ENCODE measurements at regions of chr2 and their contacts with region 1.

Region 1: DNA sequence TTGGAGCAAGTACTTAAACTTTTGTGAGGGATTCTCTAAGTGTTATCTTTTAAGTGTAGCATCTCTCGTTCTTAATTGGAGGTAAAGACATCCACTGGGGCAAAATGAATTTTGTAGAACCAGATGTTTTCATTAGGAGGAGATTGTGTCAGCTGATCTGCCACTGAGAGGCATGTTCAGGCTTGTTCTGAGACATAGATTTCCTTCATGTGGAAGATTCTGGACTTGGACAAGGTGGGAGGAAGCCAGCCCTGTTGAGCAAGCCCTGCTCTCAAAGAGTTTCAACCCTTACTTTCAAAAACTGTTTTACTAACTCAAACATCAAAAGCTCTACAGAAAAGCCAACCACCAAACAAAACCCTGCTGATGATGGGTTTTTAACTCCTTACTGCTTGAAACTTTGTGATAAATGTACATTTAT is 6.5 kb downstream of the MAP4K4 start:
- DNase-seq: no peak
- H3K4me3 ChIP-seq: peak overlapping the region in 17 of 59 donors; percentile 1 to 90 (median 20)
- H3K27ac ChIP-seq: peak overlapping the region in 57 of 59 donors; percentile 3 to 98 (median 72)
- H3K27me3 ChIP-seq: no peaks in the 10 kb centered on the region
- CTCF ChIP-seq: no peak

Region 2: GRCh38 chr2:101461381-101461780 is 242.7 kb before region 1 on chr2:
- intact Hi-C with region 1: no loop called
- DNase-seq: no peak
- H3K4me3 ChIP-seq: no peak overlapping the region
- H3K27ac ChIP-seq: no peak overlapping the region
- H3K27me3 ChIP-seq: no peaks in the 10 kb centered on the region
- CTCF ChIP-seq: no peak

Region 3: DNA sequence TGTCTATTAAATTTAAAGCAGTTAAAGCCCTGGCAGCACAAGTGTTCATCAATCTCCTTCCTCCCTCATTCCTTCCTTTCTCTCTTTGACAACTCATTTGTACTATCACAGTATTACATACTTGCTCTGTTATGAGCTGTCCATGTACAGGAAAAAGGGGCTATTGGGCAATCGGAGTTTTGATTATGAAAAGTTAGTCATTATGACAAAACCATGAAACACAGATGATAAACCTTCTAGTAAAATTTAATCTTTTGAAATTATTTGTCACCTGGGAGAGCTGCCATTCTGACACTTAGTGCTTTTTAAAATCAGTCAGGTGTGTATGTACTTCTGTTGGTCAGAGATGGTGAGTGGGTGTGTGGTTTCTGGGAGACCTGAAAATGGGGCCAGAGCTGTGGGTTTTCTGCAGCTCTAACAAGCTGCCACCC is 32.8 kb after region 1 on chr2:
- intact Hi-C with region 1: loop called (anchors 5 kb)
- DNase-seq: no peak
- H3K4me3 ChIP-seq: peak overlapping the region in 17 of 59 donors; percentile 1 to 41 (median 19)
- H3K27ac ChIP-seq: peak overlapping the region; percentile 60 to 98 (median 94)
- H3K27me3 ChIP-seq: no peaks in the 10 kb centered on the region
- CTCF ChIP-seq: no peak

Measured in dorsolateral prefrontal cortex (tissue), 120 donors.